Cardiac septum (tissue), 1 donor: ENCODE measurements at regions of chr4 and their contacts with region 1.

Region 1: GRCh38 chr4:76305971-76306881 is at the start of gene STBD1:
- DNase-seq: peak; percentile 93
- total RNA-seq, gene STBD1: 37.6 TPM

Region 2: DNA sequence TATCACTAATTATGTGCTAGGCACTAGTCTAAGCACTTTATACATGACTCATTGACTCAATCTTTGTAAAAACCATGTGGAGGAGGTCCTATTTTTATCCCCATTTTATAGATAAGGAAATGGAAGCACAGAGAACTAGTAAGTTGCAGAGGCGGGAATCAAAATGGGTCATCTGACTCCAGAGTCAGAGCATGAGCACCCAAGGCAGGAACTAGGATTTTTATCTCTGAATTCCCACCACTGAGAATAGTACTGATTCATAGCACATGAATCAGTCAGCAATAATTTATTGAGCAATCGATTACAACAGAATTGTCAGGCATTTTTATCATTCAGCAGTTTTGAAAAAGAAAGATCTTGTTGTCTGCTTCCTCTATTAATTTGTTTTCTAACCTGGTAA is 111.9 kb before region 1 on chr4:
- intact Hi-C with region 1: loop called (anchors 5 kb)
- DNase-seq: no peak

Region 3: GRCh38 chr4:76251441-76252270 is 54.6 kb before region 1 on chr4 and contains the start of gene FAM47E:
- intact Hi-C with region 1: loop called (anchors 5 kb)
- DNase-seq: peak; percentile 89
- total RNA-seq, gene FAM47E: 2.9 TPM

Region 4: DNA sequence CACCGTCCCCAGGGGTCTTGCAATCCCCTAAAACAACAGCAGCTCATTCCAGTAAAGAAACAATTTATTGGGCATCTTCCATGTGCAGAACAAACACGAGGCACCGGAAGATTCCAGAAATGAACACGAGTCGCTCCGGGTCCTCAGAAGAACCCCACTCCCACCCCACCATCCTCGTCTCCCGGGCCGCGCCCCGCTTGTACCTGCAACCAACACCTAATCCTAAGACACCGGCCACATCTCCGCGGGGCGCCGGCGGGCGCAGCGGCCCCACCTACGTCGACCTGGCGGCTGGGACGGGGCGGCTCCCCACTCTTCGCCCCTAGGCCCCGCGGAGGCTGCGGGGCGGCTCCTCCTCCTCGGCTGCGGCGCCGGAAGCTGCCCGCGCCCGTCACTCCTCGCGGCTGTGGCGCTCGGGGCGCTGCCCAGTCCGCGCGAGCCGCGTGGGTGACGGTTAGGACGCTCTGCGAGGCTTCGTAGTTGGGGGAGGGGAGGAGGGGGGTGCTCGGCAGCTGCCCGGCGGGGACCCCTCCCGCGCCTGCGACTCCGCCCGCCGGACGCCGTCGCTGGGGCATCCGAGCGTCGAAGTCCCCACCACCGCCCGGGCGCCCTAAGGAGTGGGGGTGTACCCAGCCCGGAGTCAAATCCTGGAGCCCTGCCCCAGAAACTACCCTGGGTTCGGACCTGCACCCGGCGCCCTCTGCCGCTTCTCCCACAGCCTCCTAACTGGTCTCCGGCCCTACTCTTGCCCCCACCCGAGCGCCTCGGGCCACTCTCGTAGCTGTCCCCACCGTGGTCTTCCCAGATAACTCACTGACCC is 114.7 kb after region 1 on chr4 and contains the start of gene CCDC158:
- intact Hi-C with region 1: loop called (anchors 5 kb)
- DNase-seq: no peak
- total RNA-seq, gene CCDC158: 0.81 TPM

Region 5: GRCh38 chr4:76830964-76831703 is 524.9 kb after region 1 on chr4:
- intact Hi-C with region 1: no loop called
- DNase-seq: no peak